AG04449 (cell line): ENCODE measurements at regions of chr11 and their contacts with region 1.

Region 1: DNA sequence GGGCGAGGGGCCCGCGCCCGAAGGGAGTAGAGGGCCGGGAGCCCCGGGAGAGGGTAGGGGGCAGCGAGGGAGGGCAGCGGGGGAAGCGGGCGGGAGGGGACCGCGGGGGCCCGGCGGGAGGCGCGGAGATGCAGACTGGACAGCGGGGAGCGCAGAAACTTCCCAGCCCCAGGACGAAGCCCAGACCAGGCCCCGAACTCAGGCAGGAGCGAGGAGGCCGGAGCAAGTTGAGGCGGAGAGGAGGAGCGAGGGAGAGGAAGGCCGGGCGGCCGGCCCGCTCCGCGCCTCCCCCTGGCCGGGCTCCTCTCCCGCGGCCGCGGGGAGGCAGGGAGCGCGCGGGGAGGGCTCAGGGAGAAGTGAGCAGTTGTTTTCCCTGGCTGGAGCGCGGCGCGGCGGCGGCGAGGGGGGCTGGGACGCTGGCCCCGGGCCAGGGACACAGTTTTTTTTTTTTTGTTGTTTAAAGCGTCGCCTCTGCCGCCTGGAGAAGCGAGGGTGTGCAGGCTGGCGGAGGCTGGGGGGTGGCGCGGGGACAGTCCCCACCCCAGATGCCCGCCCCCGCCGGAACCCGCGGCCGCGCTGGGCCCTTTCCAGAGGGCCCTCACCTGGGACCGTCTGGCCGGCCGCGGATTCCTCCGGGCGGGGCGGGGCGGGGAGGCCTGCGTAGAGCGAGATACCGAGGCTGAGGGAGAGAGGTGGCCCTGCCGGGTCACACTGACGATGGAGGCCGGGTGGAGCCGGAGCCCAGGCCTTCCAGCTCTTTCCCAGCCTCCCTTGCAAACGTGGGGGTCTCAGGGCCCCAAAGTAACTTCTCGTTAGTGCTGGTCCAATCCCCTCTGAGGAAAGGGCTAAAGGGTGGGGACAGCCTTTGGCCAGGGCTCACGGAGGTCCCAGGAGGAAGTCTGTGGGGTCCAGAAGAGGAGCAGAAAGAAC is at the start of gene LTBP3:
- DNase-seq: no peak
- H3K4me3 ChIP-seq: peak within 1 kb of the TSS; percentile 69
- CTCF ChIP-seq: no peak

Region 2: DNA sequence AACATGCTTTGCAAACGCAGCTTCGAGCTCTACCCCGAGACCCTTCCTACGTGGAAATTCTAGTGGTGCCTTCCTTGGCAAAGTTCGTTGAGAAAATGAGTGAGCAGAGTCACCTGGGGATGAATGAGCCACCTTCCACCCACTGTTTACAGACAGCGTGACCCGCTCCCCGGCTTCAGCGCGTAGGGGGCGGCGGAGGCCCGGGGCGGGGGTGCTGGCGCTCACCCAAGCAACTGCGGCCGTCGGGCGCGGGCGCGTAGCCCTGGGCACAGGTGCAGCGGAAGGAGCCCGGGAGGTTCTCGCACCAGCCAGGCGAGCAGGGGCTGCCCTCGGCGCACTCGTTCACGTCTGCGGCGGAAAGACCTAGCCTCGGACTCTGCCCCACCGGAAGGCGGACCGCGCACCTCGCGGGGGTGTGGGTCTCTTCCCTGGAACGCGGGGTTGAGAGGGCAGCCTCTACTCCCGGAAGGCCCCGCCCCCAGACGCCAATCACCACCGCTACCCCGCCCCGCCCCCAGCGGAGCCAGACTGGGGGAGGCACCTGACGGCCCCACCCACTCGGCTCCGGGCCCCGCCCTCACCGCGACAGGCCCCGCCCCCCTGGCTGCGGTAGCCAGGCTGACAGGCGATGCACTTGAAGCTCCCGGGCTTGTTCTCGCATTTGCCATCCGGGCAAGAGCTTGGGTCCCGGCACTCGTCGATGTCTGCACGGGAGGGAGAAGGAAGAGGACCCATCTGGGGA is 11.9 kb before region 1 on chr11:
- CTCF ChIA-PET with region 1: interaction called, 207 read pairs
- POLR2A ChIA-PET with region 1: interaction called, 5 read pairs
- DNase-seq: no peak
- H3K4me3 ChIP-seq: no peak overlapping the region
- CTCF ChIP-seq: no peak

Region 3: DNA sequence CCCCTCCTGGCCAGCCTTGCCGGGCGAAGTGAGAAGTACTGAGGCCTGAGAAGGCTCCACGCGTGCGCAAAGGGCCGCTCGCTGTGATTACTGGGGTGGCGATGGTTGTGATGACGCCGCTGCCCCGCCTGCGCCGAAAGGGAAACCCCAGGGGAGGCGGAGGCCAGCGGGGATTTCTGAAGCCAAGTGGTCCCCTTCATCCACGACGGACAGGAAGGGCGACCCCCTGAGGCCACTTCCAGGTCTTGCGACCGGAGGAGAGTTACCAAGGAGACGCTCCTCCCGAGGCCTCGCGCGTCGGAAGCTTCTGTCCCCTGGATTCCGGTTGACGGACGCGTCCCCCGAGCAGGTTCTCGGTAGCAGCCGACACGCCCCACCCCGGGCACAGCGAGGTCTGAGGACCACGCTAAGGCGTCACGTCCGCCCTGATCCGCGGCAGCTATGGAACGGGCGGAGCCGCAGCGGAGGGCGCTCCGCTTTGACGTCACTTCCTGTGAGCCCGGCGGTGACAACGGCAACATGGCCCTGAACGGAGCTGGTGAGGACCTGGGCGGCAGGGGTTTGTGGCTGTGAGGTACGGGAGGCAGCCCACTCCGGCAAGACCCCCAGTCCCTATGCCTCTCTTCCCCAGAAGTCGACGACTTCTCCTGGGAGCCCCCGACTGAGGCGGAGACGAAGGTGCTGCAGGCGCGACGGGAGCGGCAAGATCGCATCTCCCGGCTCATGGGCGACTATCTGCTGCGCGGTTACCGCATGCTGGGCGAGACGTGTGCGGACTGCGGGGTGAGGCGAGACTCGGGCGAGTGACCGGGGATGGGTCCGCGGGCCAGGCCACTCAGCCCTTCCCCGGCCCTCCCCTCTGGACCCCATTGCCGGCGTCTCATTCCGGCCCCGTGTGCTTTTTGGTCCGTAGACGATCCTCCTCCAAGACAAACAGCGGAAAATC is 12.0 kb after region 1 on chr11 and contains the start of gene ZNRD2:
- CTCF ChIA-PET with region 1: interaction called, 80 read pairs
- POLR2A ChIA-PET with region 1: interaction called, 15 read pairs
- DNase-seq: peak; percentile 88
- H3K4me3 ChIP-seq: peak within 1 kb of the TSS; percentile 89
- CTCF ChIP-seq: peak; percentile 62

Region 4: GRCh38 chr11:65685981-65686380 is 127.7 kb after region 1 on chr11:
- CTCF ChIA-PET with region 1: no interaction called
- POLR2A ChIA-PET with region 1: no interaction called
- DNase-seq: no peak
- H3K4me3 ChIP-seq: no peak overlapping the region
- CTCF ChIP-seq: no peak